ENCODE measurements at regions of chr10 and their contacts with region 1.

Region 1: DNA sequence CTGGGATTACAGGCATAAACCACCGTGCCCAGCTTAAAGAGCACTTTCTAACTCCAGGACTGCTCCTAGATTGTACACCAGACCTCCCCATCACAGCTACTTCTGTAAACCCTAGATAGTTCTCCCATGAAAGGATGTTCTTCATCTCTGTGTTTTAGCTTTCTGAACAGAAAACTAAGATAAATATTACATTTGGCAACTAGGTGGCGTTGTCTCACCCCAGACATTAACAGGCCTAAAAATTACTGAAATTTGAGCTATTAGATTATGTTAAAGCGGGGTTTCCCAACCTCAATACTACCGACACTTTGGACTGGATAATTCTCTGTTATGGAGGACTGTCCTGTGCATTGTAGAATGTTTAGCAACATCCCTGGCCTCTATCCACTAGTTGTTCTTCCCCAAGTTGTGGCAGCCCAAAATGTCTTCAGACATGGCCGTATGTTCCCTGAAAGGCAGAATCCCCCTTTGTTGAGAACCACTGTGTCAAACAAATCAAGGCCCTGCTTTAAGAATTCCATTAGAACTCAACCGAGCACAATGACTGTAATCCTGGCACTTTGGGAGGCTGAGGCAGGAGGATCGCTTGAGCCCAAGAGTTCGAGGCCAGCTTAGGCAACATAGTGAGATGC is 19.1 kb downstream of the ATOH7 start:
- DNase-seq: no peak
- ATAC-seq: no peak

Region 2: DNA sequence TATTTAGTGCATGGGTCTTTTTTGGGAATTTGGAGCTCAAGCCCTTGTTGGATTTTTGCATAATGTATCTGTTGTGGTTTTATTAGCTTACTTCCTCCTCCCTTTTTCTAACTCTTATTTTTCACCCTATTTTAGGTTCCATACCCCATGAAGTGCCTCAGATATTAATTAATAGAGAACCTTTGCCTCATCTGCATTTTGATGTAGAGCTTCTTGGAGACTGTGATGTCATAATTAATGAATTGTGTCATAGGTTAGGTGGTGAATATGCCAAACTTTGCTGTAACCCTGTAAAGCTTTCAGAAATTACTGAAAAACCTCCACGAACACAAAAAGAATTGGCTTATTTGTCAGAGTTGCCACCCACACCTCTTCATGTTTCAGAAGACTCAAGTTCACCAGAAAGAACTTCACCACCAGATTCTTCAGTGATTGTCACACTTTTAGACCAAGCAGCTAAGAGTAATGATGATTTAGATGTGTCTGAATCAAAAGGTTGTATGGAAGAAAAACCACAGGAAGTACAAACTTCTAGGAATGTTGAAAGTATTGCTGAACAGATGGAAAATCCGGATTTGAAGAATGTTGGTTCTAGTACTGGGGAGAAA is 300.4 kb before region 1 on chr10:
- intact Hi-C with region 1: no loop called
- DNase-seq: no peak
- ATAC-seq: no peak

Region 3: DNA sequence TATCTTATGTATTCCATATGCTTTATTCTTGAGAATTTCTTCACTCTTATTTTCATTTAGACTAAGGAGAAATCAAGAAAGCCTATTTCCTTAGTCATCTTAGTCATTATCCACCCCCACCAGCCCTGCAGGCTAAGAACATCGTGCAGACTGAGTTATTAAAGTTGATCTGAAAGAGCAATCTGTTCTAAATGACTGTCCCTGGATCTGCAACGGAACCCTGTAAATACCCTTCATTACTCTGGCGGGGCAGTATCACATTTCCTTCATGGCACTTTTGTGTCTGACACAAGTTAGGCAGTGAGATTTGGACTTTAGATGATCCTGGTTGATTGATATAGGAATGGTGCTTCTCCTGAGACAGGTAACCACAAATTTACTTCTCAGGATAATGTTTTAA is 107.0 kb before region 1 on chr10:
- intact Hi-C with region 1: no loop called
- DNase-seq: no peak
- ATAC-seq: no peak

Region 4: DNA sequence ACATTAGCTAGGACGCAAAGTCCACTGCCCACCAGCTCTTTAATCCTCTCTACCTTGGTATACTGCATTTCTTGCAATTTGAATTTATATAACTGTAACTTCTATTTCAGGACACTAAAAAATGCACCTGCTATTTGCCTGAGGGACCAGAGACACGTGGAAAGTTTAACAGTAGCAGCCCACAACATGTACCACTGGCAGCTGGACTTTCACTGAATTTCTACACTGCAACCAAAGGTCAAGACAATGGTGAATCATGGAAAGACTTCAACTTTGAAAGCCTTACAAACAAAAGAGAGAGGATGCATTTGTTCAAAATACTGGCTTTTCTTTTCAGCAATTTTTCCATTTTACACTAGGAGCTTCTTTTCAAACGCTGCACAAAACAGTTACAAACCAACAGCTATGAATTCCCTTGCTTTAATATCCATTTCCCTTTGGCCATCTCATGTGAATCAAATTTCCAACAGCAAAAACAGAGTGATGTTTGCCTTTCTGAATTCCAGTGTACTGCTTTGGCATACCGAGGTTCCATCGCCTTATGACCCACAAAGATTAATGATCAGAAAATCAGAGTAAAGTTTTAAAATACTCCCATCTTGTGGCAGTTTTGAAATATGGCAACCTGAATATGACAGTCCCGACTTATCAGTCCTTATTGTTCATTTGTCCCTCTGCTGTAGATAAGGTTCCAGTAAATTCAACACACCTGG is 89.1 kb after region 1 on chr10:
- intact Hi-C with region 1: loop called in 1 of 2 experiments (anchors 5 kb)
- DNase-seq: no peak
- ATAC-seq: peak; percentile 58

Measured in left colon (tissue), 2 donors.